Cardiac septum (tissue), 1 donor: ENCODE measurements at regions of chr3 and their contacts with region 1.

Region 1: DNA sequence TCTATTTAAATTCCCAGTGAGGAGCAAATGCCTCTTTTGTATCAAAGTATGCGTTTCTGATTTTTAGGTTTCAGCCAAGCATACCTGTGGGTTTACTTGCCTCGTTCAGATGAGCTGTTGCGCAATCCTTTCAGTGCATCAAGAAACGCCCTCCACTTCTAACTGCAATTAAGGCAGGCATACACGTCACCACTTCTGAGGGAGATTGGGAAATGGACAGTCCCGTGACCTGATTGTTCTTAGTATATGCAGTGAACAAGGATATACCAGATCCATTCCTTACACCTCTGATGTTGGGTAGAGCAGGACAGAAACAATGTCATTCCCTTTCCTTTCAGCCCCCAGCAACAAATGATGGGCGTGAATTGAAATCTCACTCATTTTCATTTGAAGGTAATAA is 219.0 kb downstream of the ITPR1 start:
- DNase-seq: no peak

Region 2: GRCh38 chr3:4804161-4805058 is 92.3 kb after region 1 on chr3:
- intact Hi-C with region 1: no loop called
- DNase-seq: no peak

Region 3: DNA sequence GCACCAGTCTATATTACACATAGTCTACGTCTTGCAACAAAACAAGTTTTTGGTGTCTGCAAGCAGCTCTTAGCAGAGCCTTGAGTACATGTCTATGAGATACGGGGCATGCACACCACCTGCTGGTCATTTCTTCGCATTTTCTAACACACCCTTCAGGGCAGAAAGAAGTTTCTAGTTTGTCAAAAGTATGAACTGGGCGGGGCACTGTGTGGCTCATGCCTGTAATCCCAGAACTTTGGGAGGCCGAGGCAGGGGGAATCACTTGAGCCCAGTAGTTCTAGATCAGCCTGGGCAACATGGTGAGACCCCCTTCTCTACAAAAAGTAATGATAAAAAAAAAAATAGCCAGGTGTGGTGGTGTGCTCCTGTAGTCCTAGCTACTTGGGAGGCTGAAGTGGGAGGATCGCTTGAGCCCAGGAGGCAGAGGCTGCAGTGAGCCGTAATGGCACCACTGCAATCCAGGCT is 345.7 kb after region 1 on chr3:
- intact Hi-C with region 1: loop called (anchors 1 kb)
- DNase-seq: peak; percentile 85

Region 4: DNA sequence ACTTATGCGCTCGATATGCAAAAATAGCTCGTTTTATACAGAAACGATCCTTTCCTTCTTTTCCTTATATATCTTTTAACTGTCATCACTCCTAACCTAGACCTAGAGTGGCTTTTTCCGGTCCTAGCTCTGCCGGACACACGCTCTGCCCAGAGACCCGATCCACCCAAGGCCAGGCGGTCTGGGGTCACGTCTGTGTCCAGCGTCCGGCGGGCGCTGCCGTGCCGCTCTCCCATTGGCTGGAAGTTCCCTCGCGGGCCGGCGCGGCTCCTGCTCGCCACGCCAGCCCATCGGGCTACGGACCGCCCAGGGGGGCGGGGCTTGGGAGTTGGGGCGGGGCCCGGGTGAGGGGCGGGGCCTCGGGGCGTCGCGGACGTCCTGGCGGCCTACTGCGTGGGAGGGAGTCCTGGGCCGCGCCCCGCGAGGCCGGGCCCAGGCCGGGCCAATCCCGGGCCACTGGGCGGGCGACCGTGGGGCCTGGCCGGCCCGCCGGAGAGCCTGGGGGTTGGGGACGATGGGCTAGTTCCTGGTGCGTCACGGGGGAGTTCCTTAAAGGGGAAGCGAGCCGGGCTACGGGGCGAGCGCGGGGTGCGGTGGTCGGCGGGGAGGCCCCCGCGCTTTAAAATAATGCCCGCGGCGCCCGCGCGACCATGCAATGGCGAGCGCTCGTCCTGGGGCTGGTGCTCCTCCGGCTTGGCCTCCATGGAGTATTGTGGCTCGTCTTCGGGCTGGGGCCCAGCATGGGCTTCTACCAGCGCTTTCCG is 475.2 kb after region 1 on chr3 and contains the start of gene EDEM1:
- intact Hi-C with region 1: loop called (anchors 10 kb)
- DNase-seq: peak; percentile 99
- total RNA-seq, gene EDEM1: 10.3 TPM